Adrenal gland (tissue), 19 donors: ENCODE measurements at regions of chr4 and their contacts with region 1.

Region 1: GRCh38 chr4:153083447-153083947 is 120.7 kb upstream of the TRIM2 start:
- DNase-seq: peak; percentile 53 to 84 (median 65)
- H3K4me3 ChIP-seq: no peak overlapping the region
- H3K27ac ChIP-seq: no peak overlapping the region
- H3K4me1 ChIP-seq: peaks cover 0 to 5% of the 10 kb centered on the region in 2 donors
- H3K27me3 ChIP-seq: no peaks in the 10 kb centered on the region
- CTCF ChIP-seq: peak; percentile 49 to 74 (median 68)
- POLR2A ChIP-seq: no peak

Region 2: GRCh38 chr4:152779513-152780266 is 303.8 kb before region 1 on chr4 and contains the starts of genes ARFIP1 and TIGD4:
- intact Hi-C with region 1: loop called in 1 of 2 experiments (anchors 5 kb)
- DNase-seq: peak; percentile 98 to 99 (median 98)
- H3K4me3 ChIP-seq: peak within 1 kb of the TSS; percentile 19 to 87 (median 72)
- H3K27ac ChIP-seq: peak within 1 kb of the TSS; percentile 53 to 96 (median 93)
- H3K4me1 ChIP-seq: peaks cover 6 to 27% of the 10 kb centered on the region in 2 donors
- H3K27me3 ChIP-seq: no peaks in the 10 kb centered on the region
- CTCF ChIP-seq: peak in 2 of 6 experiments; percentile 1 to 14
- POLR2A ChIP-seq: peak; percentile 13 to 73
- total RNA-seq, gene ARFIP1: 19.1 to 35.0 (median 29.3) TPM
- total RNA-seq, gene TIGD4: 0.28 to 2.0 (median 0.35) TPM in 8 of 9 donors, not detected in the other

Region 3: DNA sequence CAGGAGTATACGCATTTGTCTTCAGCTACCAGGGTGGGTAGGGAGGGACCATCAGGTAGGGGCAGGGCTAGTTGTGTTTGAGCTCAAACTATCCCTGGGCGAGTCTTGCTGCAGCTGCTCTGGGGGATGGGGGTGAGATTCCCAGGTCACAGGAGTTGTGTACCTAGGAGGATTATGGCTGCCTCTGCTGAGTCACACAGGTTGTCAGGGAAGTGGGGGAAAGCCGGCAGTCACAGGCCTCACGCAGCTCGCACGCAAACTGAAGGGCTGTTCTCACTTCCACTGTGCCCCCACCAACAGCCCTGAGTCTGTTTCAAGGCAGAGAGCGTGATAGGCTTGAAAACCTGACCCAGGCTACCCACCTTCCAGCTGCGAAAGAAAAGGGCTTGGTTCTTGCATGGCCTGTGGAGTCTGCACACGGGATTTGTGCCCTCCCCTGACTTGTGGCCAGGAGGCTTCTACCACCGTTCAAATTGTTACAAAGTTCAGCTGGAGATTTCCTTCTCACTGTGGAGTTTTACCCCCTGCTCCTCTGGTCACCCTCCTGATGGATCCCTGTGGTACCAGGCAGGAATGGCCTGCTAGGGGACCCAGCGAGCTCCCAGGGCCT is 239.9 kb before region 1 on chr4:
- intact Hi-C with region 1: loop called (anchors 5 kb)
- DNase-seq: no peak
- H3K4me3 ChIP-seq: no peak overlapping the region
- H3K27ac ChIP-seq: no peak overlapping the region
- H3K4me1 ChIP-seq: peaks cover 0 to 3% of the 10 kb centered on the region in 2 donors
- H3K27me3 ChIP-seq: no peaks in the 10 kb centered on the region
- CTCF ChIP-seq: no peak
- POLR2A ChIP-seq: no peak

Region 4: DNA sequence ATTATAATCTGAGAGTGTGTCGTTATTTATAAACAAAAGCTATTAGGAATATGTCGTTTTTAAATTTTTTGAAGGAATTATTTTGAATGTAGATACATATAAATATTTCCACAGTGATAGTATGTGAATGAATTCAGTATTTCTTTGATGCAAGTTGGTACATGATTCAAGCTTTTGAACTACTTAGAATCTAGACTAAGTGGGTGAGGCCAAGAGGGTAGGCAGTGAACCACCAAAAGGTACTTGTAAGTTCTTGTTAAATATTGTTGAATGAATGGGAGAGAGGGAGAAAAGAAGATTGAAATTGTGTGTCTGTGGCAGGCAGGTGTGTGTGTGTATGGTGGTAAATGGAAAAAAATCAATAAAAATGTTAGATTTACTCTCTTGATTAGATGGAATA is 234.1 kb before region 1 on chr4:
- intact Hi-C with region 1: loop called (anchors 5 kb)
- DNase-seq: no peak
- H3K4me3 ChIP-seq: no peak overlapping the region
- H3K27ac ChIP-seq: no peak overlapping the region
- H3K4me1 ChIP-seq: peaks cover 0 to 9% of the 10 kb centered on the region in 2 donors
- H3K27me3 ChIP-seq: no peaks in the 10 kb centered on the region
- CTCF ChIP-seq: no peak
- POLR2A ChIP-seq: no peak

Region 5: DNA sequence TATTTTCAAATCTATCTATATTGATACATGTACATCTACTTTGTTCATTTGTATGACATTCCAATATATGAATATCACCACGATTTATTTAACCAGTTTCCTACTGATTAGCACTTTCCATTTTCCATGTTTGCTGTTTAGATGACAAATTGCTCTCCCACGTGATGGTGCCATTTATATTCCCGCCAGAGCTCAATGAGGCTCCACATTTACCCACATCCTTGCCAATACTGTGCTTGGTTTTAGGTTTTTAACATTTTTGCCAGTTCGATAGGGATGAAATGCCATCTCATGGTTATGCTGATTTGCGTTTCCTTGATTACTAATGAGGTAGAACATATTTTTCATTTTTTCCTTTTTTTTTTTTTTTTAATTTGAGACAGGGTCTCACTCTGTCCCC is 34.1 kb after region 1 on chr4:
- intact Hi-C with region 1: no loop called
- DNase-seq: no peak
- H3K4me3 ChIP-seq: no peak overlapping the region
- H3K27ac ChIP-seq: no peak overlapping the region
- H3K4me1 ChIP-seq: peaks cover 5 to 12% of the 10 kb centered on the region in 2 donors
- H3K27me3 ChIP-seq: no peaks in the 10 kb centered on the region
- CTCF ChIP-seq: no peak
- POLR2A ChIP-seq: no peak

Region 6: GRCh38 chr4:153127760-153128494 is 44.4 kb after region 1 on chr4:
- intact Hi-C with region 1: loop called (anchors 5 kb)
- DNase-seq: peak; percentile 79 to 96 (median 92)
- H3K4me3 ChIP-seq: no peak overlapping the region
- H3K27ac ChIP-seq: no peak overlapping the region
- H3K4me1 ChIP-seq: no peaks in the 10 kb centered on the region
- H3K27me3 ChIP-seq: no peaks in the 10 kb centered on the region
- CTCF ChIP-seq: peak; percentile 76 to 87 (median 86)
- POLR2A ChIP-seq: no peak

Region 7: DNA sequence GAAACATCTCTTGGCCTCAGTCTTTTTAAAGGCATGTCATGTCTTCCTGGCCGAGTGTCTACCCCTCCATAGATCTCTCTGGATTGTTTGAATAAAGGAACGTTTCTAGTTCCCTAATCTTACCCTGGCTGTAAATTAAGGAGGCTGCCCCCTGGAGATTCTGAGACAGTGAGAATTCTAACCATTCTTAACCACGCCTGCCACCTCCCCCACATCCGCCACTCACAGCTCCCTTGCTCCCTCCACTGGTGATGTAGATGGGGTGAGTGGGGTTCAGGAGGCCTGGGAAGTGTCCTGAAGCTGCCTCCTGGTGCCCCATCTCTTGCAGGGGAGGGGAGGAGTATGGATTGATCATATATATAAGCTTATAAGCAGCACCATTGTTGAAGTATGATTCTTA is 72.8 kb after region 1 on chr4:
- intact Hi-C with region 1: no loop called
- DNase-seq: no peak
- H3K4me3 ChIP-seq: no peak overlapping the region
- H3K27ac ChIP-seq: no peak overlapping the region
- H3K4me1 ChIP-seq: peaks cover 19 to 22% of the 10 kb centered on the region in 2 donors
- H3K27me3 ChIP-seq: peaks cover 5% of the 10 kb centered on the region
- CTCF ChIP-seq: no peak
- POLR2A ChIP-seq: no peak